Activated T-helper 2 cell treated with anti-CD3 and anti-CD28 coated beads, Interferon-gamma antibody, Interleukin-2, Interleukin-4, amounts not matched to agents 10 μg/mL and 5 μg/mL and 100 μg/mL, durations not matched to agents 14 hours and 24 hours and 36 hours (primary cell): ENCODE measurements at regions of chr6 and their contacts with region 1.

Region 1: DNA sequence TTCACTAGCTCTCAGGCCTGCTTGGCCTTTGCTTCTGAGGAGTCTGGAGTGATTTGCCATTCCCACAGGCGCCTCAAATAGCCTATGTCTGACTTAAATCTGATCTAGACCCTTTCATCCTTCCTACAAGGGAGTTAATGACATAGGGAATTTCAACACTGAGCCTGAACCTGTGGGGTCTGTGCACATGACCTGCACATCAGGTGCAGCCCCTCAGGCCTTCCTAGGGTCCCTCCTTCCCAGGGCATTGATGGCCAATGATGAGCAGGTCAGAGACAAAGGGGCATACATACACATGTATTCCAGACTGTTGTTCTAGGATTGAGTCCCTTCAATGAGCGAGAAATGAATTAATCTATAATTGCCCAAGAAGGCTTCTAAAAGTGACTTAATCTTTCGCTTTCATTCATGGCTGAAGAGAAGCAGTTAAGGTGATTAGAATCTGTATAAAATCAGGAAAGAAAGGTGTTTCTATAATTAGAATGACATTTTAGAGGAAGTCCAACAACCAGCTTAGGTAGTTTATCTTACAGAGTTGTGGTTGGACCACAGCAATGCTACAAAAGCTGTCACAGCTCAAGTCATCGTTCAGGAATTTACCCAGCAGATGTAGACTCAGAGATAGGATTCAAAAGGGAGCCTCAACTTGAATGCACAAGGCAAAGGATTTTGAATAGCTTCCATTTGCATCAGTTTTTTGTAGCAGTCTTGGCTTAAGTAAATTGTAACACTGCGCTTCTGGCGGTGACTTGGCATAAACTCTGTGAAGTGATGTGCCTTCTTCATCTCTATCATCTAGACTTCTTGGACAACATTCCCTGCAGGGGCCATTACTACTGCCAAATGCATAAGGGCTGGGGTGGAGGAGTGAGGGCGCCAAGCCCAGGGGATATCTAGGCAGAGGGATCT is 27.0 kb upstream of the TBC1D7 start:
- DNase-seq: peak; percentile 39
- H3K4me3 Mint-ChIP-seq: peak overlapping the region; percentile 71
- H3K27ac Mint-ChIP-seq: peak overlapping the region; percentile 93
- H3K4me1 Mint-ChIP-seq: peaks cover 51% of the 10 kb centered on the region
- H3K27me3 Mint-ChIP-seq: no peaks in the 10 kb centered on the region

Region 2: DNA sequence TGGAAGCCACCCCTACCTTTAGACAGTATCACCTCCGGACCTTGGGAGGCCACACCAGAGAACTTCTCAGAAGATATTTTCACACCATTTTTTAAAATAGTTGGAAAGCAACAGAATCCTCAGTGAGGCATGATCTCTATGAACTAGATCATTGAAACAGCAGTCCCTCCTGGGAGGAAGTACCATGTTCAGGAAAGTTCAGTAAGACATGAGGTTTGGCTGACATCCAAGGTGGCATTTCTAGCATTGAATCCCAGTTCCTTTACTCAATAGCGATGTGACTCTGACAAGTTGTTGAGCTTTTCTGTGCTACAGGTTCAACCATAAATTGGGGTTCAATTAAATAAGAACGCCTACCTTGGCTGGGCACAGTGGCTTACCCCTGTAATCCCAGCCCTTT is 196.0 kb before region 1 on chr6:
- intact Hi-C with region 1: no loop called
- DNase-seq: no peak
- H3K4me3 Mint-ChIP-seq: no peak overlapping the region
- H3K27ac Mint-ChIP-seq: no peak overlapping the region
- H3K4me1 Mint-ChIP-seq: peaks cover 2% of the 10 kb centered on the region
- H3K27me3 Mint-ChIP-seq: peaks cover 11% of the 10 kb centered on the region

Region 3: DNA sequence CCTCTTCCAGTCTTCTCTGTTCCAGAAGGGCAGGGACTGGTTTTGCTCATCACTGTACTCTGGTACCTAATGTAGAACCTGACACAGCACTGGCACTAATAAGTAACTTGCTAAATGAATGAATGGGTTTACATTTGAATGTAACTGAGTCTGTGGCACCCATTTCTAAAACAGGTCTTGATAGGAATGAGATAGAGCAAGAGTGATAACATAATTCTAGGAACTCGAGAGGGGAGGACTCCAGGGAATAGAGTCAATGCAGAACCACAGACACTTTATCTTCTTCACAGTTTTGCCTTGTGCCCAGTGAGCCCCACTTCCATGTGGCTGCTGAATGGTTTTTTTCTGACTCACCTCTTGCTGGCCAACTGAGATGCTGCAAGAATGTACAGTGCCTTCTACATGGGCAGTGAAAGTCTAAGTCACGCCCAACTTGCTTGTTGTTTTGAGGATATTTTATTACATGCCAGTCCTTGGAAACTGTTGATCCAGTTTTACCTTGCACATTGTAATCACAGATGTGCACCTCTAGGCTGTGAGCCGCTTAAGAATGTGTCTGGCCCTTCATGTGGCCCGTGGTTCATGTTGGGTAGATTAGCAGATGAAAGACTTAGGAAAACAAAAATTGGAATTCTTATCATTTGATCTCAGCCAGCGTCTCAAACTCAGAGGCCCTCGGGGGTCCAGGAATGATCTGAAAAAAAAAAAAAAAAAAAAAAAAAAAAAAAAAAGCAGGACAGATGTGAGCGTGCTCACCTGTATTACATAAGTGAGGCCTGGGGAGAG is 88.0 kb before region 1 on chr6:
- intact Hi-C with region 1: loop called (anchors 1 kb)
- DNase-seq: no peak
- H3K4me3 Mint-ChIP-seq: no peak overlapping the region
- H3K27ac Mint-ChIP-seq: no peak overlapping the region
- H3K4me1 Mint-ChIP-seq: peaks cover 14% of the 10 kb centered on the region
- H3K27me3 Mint-ChIP-seq: peaks cover 12% of the 10 kb centered on the region

Region 4: GRCh38 chr6:13311155-13311554 is 44.1 kb before region 1 on chr6:
- intact Hi-C with region 1: no loop called
- DNase-seq: no peak
- H3K4me3 Mint-ChIP-seq: no peak overlapping the region
- H3K27ac Mint-ChIP-seq: no peak overlapping the region
- H3K4me1 Mint-ChIP-seq: peaks cover 1% of the 10 kb centered on the region
- H3K27me3 Mint-ChIP-seq: no peaks in the 10 kb centered on the region

Region 5: DNA sequence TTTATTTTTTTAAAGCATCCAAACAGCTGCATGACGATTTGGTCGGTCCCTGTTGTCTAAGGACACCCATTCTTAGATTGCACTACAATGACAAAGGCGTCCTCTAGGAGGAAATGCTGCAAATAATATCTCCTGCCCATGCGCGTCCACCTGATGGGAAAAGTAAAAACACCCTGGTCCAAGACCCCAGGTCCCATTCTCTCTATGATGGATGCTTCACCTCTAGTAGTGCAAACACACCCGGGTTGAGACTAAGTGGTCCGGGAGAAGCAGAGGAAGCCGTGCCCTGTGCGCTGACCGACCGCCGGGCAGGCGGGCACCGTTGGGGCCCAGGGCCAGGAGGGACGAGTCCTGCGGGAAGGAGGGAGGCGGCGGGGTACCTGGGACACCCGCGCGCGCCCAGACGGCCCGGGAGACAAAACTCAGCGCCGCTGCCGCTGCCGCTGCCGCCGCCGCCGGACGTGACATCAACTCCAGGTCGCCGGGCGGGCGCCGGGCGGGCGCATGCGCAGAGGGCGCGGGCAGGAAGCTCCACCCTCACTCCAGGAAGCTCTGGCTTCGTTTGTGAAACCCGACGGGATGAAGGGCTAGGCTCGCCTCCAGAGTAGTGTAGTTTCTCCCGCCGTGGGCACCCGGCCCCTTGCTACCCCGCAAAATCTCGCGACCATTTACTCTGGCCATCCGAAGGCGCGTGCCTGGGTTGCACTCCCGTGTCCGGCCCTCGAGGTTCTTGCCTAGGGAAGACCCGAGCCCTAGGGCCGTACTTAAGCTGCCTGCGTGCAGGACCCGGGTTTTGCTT is 27.0 kb before region 1 on chr6 and contains the start of gene TBC1D7:
- intact Hi-C with region 1: loop called (anchors 1 kb)
- DNase-seq: peak; percentile 93
- H3K4me3 Mint-ChIP-seq: peak within 1 kb of the TSS; percentile 89
- H3K27ac Mint-ChIP-seq: peak within 1 kb of the TSS; percentile 89
- H3K4me1 Mint-ChIP-seq: peaks cover 26% of the 10 kb centered on the region
- H3K27me3 Mint-ChIP-seq: no peaks in the 10 kb centered on the region
- total RNA-seq, gene TBC1D7: 22.9 and 23.3 TPM in 2 replicates

Region 6: GRCh38 chr6:13368731-13369115 is 13.4 kb after region 1 on chr6:
- intact Hi-C with region 1: no loop called
- DNase-seq: no peak
- H3K4me3 Mint-ChIP-seq: no peak overlapping the region
- H3K27ac Mint-ChIP-seq: no peak overlapping the region
- H3K4me1 Mint-ChIP-seq: peaks cover 3% of the 10 kb centered on the region
- H3K27me3 Mint-ChIP-seq: no peaks in the 10 kb centered on the region

Region 7: DNA sequence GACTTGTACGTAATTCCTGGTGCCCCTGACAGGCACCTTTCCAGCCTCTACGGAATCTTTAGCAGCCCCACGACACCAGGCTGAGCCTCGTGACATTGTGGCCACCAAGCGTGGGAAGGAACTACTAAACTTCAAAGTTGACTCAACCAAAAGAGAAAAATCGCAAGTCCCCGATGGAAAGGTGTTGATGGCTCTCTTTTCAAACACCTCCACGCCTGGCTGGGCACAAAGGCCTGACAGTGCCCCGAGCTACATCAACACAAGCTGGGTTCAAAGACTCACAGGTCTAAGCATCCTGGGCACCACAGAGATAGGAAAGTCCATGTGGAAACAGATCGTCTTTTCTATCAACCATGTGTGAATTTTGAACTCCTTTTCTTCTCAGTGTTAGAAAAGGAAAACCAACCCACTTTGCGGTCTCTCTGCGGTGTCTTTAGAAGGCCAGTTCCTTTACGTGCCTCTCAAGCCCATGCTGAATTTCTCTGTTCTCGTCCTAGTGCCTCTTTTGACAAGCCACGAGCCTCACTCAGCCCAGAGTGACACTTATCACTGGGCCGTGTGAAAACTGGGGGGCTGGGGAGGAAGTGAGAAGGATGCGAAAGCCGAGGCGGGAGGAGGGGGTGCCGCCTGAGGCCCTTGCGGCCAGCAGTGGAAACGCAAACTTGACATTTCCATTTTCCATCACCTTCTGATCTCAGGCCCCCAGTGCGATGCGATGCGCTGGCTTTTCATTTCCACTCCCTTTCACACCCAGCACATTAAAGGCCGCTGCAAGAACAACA is 72.7 kb after region 1 on chr6:
- intact Hi-C with region 1: loop called (anchors 1 kb)
- DNase-seq: peak; percentile 64
- H3K4me3 Mint-ChIP-seq: peak overlapping the region; percentile 27
- H3K27ac Mint-ChIP-seq: peak overlapping the region; percentile 84
- H3K4me1 Mint-ChIP-seq: peaks cover 71% of the 10 kb centered on the region
- H3K27me3 Mint-ChIP-seq: no peaks in the 10 kb centered on the region

Region 8: DNA sequence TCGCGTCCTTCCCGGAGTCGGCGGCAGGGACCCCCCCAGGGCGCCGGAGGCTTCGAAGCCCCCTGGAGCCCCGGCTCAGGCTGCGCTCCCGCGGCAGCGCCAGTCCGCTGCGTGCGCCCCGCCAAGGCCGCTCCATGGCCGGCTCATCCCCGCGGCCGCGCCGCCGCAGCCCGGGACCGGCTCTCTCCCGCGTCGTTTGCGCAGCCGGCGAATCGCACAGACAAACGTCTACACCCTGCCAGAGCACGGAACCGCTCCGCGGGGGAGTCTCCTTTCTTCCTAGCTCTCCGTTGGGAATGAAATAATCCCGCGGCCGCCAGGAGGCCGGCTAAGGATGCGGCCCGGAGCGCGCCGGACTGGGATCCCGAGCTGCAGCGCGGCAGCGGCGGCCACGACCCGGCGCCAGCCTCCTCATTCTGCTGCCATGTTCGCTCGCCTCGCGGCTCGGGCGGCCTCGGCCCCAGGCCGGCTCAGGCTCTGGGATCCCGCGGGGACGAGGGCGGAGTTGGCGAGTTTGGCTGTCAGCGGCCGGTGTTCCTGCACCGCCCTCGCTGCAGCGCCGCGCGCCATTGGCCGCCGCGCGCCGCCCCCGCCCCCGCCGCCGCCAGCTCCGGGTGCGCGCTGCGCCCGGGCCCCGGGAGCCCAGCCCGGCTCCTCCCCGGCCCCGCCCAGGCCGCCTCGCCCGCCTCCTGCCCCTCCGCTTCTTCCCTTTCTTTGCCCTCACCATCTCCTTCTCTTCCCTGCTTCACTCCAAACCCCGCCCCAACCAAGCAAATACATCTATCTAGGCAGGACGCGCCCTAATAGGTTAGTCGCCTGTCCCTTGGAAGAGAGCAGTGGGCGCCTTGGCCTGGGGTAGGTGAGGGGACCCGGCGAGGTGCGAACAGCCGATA is 132.1 kb after region 1 on chr6 and contains the start of gene GFOD1:
- intact Hi-C with region 1: loop called (anchors 1 kb)
- DNase-seq: peak; percentile 78
- H3K4me3 Mint-ChIP-seq: peak within 1 kb of the TSS; percentile 85
- H3K27ac Mint-ChIP-seq: peak within 1 kb of the TSS; percentile 70
- H3K4me1 Mint-ChIP-seq: peaks cover 42% of the 10 kb centered on the region
- H3K27me3 Mint-ChIP-seq: peaks cover 12% of the 10 kb centered on the region
- total RNA-seq, gene GFOD1: 4.6 and 4.8 TPM in 2 replicates